ENCODE measurements at regions of chr4 and their contacts with region 1.

Region 1: DNA sequence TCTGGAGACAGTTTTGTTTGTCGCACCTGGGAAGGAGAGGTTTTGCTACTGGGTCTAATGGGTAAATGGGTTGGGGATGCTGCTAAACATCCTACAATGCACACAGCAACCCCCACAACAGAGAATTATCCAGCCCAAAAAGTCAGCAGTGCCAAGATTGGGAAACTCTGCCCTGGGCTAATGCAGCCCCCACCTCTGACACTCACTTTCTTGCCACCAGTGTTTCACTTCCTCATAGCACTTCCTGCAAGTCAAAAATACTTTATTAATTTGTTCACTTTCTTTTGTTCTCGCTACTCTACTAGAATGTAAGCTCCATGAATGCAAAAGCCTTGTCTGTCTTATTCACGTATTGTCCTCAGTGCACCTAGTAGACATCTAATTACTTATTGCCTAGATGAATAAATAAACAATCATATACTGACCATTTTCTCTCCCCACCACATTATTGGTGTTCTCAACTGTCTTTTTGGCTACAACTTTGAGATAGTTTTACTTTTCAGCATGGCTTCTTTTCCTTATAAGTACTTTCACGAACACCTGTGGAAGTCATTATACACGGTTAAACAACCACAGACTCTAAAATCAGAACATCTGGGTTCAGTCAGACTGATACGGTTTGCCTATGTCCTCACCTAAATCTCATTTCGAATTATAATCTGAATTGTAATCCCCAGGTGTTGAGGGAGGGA is 82.0 kb upstream of the PITX2 start:
- DNase-seq: peak; percentile 87
- H3K4me3 ChIP-seq: peak overlapping the region; percentile 55
- H3K27ac ChIP-seq: peak overlapping the region; percentile 95
- H3K4me1 ChIP-seq: peaks cover 67% of the 10 kb centered on the region
- CTCF ChIP-seq: no peak

Region 2: GRCh38 chr4:110622841-110623717 is 81.8 kb before region 1 on chr4 and contains the start of gene PITX2:
- CTCF ChIA-PET with region 1: no interaction called
- POLR2A ChIA-PET with region 1: no interaction called
- intact Hi-C with region 1: loop called (anchors 2 kb)
- DNase-seq: peak; percentile 89
- H3K4me3 ChIP-seq: peak within 1 kb of the TSS; percentile 75
- H3K27ac ChIP-seq: peak within 1 kb of the TSS; percentile 48
- H3K4me1 ChIP-seq: no peaks in the 10 kb centered on the region
- CTCF ChIP-seq: no peak
- total RNA-seq, gene PITX2: 3.3 and 4.4 TPM in 2 replicates

Region 3: GRCh38 chr4:110898290-110898689 is 193.4 kb after region 1 on chr4:
- CTCF ChIA-PET with region 1: no interaction called
- POLR2A ChIA-PET with region 1: no interaction called
- intact Hi-C with region 1: loop called (anchors 5 kb)
- DNase-seq: peak; percentile 19
- H3K4me3 ChIP-seq: no peak overlapping the region
- H3K27ac ChIP-seq: no peak overlapping the region
- H3K4me1 ChIP-seq: peaks cover 30% of the 10 kb centered on the region
- CTCF ChIP-seq: no peak

Measured in OCI-LY7 (cell line).